Activated naive CD4-positive, alpha-beta T cell treated with anti-CD3 and anti-CD28 coated beads for 36 hours (primary cell): ENCODE measurements at regions of chr10 and their contacts with region 1.

Region 1: DNA sequence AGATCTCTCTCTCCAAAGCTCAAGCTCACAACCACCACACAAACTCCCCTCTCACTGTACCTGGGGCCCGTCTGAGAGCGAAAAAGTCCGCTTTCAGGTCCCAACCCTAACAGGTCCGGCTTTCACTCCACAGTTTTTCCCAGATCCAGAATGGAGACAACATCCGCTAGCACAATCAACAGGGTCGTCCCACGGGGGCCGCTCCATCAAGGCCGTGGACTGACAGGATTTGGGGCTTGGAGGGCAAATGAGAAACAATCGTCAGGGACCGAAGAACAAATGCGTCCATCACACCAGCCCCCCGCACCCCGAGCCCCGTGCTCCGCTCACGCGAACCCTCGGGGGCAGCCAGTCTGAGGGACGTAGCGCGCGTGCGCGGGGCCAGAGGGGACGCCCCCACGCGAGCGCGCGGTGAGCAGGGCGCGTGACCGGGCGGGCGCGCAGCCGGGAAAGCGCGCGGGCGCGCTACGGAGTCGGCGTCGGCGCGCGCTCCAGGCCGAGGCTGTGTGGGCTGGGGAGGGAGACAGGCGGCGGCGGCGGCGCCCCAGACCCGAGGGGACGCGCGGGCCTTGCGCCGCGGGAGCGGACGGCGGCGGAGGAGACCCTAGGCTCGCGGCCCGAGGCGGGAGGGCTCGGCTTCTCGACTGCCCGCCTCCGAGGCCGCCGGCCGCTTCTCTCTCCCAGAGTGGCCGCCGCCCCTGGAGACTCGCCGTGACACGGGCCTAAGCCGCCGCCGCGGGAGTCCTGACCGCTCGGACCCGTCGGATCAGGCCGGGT is at the start of gene SLK:
- DNase-seq: peak; percentile 76
- H3K4me3 Mint-ChIP-seq: peak within 1 kb of the TSS; percentile 99
- H3K27ac Mint-ChIP-seq: peak within 1 kb of the TSS; percentile 92
- H3K4me1 Mint-ChIP-seq: peaks cover 26% of the 10 kb centered on the region
- H3K27me3 Mint-ChIP-seq: no peaks in the 10 kb centered on the region
- total RNA-seq, gene SLK: 16.0 to 16.1 TPM

Region 2: GRCh38 chr10:103911021-103911459 is 55.8 kb before region 1 on chr10:
- CTCF ChIA-PET with region 1: no interaction called
- intact Hi-C with region 1: loop called (anchors 2 kb)
- DNase-seq: peak; percentile 57
- H3K4me3 Mint-ChIP-seq: peak overlapping the region; percentile 60
- H3K27ac Mint-ChIP-seq: peak overlapping the region; percentile 94
- H3K4me1 Mint-ChIP-seq: peaks cover 72% of the 10 kb centered on the region
- H3K27me3 Mint-ChIP-seq: no peaks in the 10 kb centered on the region

Region 3: DNA sequence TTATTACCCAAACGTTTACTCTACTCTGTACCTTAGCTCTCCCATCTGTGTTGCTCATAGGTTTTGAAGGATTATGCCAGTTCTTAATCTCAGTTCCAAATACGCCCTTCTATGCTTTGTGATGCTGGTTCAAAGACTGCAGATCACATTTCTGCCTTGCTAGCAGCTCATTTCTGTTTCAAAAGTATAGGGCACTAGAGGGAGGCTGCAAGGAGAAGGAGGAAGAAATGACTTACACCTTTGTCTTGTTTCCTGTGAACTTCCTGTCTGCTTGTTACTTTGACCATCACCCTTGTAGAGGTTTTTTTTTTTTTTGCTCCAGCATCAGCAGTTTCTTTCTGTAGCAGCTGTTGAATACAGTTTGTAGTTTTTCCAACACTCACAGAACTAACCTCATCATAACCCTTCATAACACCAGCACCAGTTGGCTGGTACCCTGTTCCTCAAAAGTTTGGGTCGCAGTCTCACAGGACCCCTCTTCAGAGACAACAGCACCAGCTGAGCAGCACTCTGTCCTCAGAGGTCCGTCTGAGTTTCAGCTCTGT is 16.6 kb after region 1 on chr10:
- CTCF ChIA-PET with region 1: interaction called, 3 read pairs
- intact Hi-C with region 1: loop called (anchors 1 kb)
- DNase-seq: peak; percentile 26
- H3K4me3 Mint-ChIP-seq: peak overlapping the region; percentile 7
- H3K27ac Mint-ChIP-seq: peak overlapping the region; percentile 72
- H3K4me1 Mint-ChIP-seq: peaks cover 59% of the 10 kb centered on the region
- H3K27me3 Mint-ChIP-seq: no peaks in the 10 kb centered on the region

Region 4: GRCh38 chr10:104254493-104255310 is 287.8 kb after region 1 on chr10 and contains the start of gene GSTO1:
- CTCF ChIA-PET with region 1: no interaction called
- intact Hi-C with region 1: no loop called
- DNase-seq: peak; percentile 72
- H3K4me3 Mint-ChIP-seq: peak within 1 kb of the TSS; percentile 99
- H3K27ac Mint-ChIP-seq: peak within 1 kb of the TSS; percentile 99
- H3K4me1 Mint-ChIP-seq: peaks cover 52% of the 10 kb centered on the region
- H3K27me3 Mint-ChIP-seq: peaks cover 4% of the 10 kb centered on the region
- total RNA-seq, gene GSTO1: 197 to 201 TPM